ENCODE measurements at regions of chr6 and their contacts with region 1.

Region 1: DNA sequence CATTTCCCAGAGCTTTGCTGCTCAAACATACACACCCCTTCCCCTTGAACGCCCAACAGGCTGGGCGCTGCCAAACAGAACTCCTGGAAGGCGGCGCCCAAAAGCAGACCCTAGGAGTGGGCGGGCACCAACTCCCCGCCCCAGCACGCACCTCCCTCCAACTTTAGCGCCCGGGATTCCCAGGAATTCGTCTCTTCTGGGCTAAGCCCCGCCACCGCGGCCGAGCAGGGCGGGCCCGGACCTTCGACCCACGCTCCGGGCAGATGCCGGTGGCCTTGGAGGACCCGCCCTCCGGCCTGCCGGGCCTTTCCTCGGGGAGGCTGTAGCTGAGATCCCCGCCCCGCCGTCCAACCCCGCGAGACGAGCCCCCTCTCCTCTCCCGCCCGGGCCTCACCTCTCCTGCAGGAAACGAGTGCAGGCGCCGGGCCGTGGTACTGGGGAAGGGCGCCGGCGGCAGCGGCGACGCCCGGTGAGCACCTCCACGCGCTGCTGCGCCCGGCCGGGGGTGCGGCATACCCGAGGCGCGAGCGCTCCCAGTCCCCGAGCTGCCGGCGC is 659 bp downstream of the MCUR1 start:
- DNase-seq: no peak
- ATAC-seq: peak; percentile 22
- H3K4me3 Mint-ChIP-seq: peak overlapping the region; percentile 89
- H3K27ac Mint-ChIP-seq: peak overlapping the region; percentile 83
- H3K4me1 Mint-ChIP-seq: peaks cover 31% of the 10 kb centered on the region
- H3K27me3 Mint-ChIP-seq: peaks cover 8% of the 10 kb centered on the region

Region 2: GRCh38 chr6:13696226-13696625 is 117.5 kb before region 1 on chr6:
- CTCF ChIA-PET with region 1: no interaction called
- POLR2A ChIA-PET with region 1: no interaction called
- DNase-seq: no peak
- ATAC-seq: no peak
- H3K4me3 Mint-ChIP-seq: no peak overlapping the region
- H3K27ac Mint-ChIP-seq: no peak overlapping the region
- H3K4me1 Mint-ChIP-seq: peaks cover 51% of the 10 kb centered on the region
- H3K27me3 Mint-ChIP-seq: no peaks in the 10 kb centered on the region

Region 3: GRCh38 chr6:13795041-13795750 is 18.5 kb before region 1 on chr6:
- CTCF ChIA-PET with region 1: interaction called, 32 read pairs
- POLR2A ChIA-PET with region 1: no interaction called
- DNase-seq: peak; percentile 91
- ATAC-seq: peak; percentile 96
- H3K4me3 Mint-ChIP-seq: no peak overlapping the region
- H3K27ac Mint-ChIP-seq: no peak overlapping the region
- H3K4me1 Mint-ChIP-seq: peaks cover 14% of the 10 kb centered on the region
- H3K27me3 Mint-ChIP-seq: no peaks in the 10 kb centered on the region

Region 4: DNA sequence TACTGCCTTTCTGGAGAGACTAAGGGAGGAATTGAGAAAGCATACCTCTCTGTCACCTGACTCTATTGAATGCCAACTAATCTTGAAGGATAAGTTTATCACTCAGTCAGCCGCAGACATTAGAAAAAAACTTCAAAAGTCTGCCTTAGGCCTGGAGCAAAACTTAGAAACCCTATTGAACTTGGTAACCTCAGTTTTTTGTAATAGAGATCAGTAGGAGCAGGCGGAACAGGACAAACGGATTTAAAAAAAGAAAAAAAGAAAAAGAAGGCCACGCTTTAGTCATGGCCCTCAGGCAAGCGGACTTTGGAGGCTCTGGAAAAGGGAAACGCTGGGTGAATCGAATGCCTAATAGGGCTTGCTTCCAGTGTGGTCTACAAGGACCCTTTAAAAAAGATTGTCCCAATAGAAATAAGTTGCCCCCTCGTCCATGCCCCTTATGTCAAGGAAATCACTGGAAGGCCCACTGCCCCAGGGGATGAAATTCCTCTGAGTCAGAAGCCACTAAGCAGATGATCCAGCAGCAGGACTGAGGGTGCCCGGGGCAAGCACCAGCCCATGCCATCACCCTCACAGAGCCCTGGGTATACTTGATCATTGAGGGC is 68.0 kb after region 1 on chr6:
- CTCF ChIA-PET with region 1: no interaction called
- POLR2A ChIA-PET with region 1: no interaction called
- DNase-seq: no peak
- ATAC-seq: no peak
- H3K4me3 Mint-ChIP-seq: no peak overlapping the region
- H3K27ac Mint-ChIP-seq: no peak overlapping the region
- H3K4me1 Mint-ChIP-seq: no peaks in the 10 kb centered on the region
- H3K27me3 Mint-ChIP-seq: no peaks in the 10 kb centered on the region

Region 5: DNA sequence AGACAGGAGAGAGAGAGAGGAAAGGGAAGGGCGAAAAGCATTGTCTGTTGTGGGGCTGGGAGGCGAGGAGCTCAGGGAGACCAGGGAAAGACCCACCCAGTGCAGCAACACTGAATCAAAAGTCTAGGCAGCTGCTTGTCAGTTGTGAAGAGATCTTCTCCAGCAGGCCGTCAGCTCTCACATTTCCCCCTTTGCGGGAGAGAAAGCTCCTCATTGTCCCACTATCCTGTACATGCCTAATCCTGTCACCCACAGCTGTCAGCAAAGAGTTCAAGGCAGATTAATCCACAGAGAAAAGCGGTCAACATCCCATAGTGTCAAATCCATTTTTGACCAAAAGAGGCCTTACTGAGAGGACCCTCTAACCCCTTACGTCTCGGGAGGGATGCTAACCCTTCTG is 138.4 kb after region 1 on chr6:
- CTCF ChIA-PET with region 1: no interaction called
- POLR2A ChIA-PET with region 1: no interaction called
- DNase-seq: no peak
- ATAC-seq: no peak
- H3K4me3 Mint-ChIP-seq: no peak overlapping the region
- H3K27ac Mint-ChIP-seq: no peak overlapping the region
- H3K4me1 Mint-ChIP-seq: no peaks in the 10 kb centered on the region
- H3K27me3 Mint-ChIP-seq: peaks cover 4% of the 10 kb centered on the region

Region 6: DNA sequence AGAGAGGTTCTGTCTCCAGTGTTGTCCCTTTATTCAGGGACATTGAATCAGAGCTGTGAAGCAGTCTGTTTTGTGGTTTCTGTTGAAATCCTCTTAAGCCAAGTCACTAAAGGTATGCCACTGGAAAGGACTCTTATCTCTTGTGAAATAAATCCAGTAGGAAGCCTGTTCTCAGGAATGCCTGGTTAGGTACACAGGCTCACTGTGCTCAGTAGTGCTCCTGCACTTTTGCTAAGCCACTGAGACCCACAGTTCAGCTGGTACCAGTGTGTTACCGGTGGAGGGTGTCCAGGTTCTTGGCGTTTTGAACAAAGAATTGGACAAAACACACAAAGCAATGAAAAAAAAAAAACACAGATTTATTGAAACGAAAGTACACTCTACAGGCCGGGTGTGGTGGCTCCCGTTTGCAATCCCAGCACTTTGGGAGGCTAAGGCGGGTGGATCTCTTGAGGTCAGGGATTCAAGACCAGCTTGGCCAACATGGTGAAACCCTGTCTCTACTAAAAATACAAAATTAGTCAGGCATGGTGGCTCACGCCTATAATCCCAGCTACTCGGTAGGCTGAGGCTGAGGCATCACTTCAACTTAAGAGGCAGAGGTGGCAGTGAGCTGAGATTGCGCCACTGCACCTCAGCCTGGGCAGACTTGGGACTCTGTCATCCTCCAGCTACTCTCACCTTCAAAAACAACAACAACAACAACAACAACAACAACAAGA is 1618.2 kb after region 1 on chr6:
- CTCF ChIA-PET with region 1: no interaction called
- POLR2A ChIA-PET with region 1: no interaction called
- DNase-seq: no peak
- ATAC-seq: no peak
- H3K4me3 Mint-ChIP-seq: no peak overlapping the region
- H3K27ac Mint-ChIP-seq: peak overlapping the region; percentile 61
- H3K4me1 Mint-ChIP-seq: peaks cover 84% of the 10 kb centered on the region
- H3K27me3 Mint-ChIP-seq: no peaks in the 10 kb centered on the region